ENCODE measurements at regions of chr1 and their contacts with region 1.

Region 1: DNA sequence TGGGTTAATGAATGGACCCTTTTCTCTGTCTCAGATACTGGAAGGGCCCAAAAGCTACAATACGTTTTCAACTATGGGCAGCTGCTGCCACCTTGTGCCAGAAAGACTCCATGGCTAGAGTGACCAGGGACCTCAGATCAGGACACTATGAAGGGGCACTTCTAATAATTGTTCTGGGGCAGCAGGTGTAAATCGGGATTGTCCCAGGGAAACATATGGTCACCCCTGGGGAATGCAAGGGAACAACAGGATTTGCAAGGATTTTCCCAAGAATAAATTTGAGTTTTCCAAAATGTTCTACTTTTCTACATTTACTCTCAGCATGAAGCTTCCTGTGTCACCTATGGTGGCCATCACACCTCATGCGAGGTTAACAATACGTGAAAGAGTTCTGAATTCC is 12.0 kb upstream of the FCAMR start:
- DNase-seq: no peak
- H3K4me3 ChIP-seq: no peak overlapping the region
- CTCF ChIP-seq: peak; percentile 65

Region 2: DNA sequence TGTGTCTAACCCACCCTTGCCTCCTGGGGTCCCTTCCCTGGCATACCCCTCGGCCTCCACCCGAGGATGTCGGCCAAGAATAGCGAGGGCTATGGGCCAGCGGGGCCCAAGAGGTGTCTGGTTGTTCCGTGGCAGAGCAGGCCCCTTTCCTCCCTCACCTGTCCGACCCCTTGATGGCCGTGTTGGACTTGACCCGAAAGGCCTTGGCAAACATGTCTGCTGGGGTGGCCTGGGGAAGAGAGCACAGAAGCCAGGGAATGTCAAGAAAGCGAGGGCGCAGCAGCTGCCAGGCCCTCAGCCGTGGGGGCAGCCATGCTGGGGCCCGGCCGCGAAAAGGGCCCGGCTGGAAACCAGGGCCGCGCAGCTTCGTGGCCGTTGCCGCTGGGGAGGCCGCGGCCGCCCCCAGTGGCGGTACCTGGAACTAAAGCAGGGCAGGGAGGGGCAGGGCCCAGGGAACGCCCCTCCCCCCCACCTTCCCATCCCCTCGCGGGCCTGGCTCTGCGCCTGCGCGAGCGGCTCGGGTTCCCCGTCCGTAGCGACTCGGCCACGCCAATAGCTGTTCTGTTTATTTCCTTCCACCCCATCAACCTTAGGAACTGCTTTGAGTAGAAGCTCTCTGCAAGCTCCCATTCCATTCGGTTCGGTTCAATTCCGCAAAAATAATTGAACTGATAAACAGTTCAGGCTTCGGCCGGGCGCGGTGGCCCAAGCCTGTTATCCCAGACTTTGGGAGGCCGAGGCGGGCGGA is 369.9 kb before region 1 on chr1 and contains the start of gene EIF2D:
- CTCF ChIA-PET with region 1: interaction called, 41 read pairs
- POLR2A ChIA-PET with region 1: no interaction called
- DNase-seq: no peak
- H3K4me3 ChIP-seq: peak within 1 kb of the TSS; percentile 95
- CTCF ChIP-seq: peak; percentile 99

Region 3: GRCh38 chr1:206725109-206725963 is 256.9 kb before region 1 on chr1:
- CTCF ChIA-PET with region 1: interaction called, 31 read pairs
- POLR2A ChIA-PET with region 1: no interaction called
- DNase-seq: no peak
- H3K4me3 ChIP-seq: no peak overlapping the region
- CTCF ChIP-seq: peak; percentile 74

Region 4: DNA sequence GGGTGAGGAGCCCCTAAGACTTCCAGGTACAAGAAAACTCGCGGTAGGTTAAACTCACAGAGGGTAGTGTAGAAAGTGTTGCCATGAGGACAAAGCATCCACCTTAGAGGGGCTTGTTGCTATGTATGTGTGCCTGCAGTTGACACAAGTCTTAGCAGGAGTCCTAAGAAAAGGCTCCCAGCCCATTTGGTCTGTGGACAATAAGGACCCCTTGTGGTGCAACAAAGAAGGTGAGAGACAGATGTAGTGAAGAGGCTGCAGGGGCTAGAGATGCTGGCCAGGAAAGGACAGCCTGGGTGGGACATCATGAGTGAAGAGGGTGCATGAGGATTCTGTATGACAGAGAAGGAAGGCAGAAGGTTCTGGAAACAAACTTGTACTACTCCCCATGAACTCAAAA is 173.6 kb before region 1 on chr1:
- CTCF ChIA-PET with region 1: interaction called, 27 read pairs
- POLR2A ChIA-PET with region 1: no interaction called
- DNase-seq: no peak
- H3K4me3 ChIP-seq: no peak overlapping the region
- CTCF ChIP-seq: peak; percentile 49

Region 5: DNA sequence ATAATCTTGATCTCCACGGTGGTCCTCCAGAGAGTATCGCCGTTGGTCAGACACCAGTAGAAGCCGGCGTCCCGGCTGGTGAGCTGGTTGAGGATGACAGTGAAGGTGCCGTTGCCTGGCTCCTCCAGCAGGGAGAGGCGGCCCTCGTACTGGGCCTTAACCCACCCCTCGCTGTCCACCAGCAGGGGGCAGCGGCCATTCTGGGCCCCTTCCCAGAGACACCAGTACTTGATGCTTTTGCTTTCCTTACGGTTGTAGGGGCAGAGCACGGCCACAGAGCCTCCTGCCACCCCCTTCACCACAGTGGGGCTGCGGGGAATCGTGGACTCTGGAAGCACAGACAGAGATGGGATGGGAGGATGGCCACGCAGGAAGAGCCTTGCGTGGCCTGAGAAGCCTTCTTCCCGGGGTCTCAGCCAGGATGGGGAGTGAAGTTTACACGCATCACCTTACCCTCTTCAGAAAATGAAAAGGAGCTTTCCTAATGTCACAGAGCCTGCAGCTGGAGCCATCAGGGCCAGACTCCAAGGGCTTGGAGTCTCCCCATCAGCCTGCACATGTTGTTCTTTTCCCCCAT is 46.6 kb before region 1 on chr1:
- CTCF ChIA-PET with region 1: interaction called, 30 read pairs
- POLR2A ChIA-PET with region 1: no interaction called
- DNase-seq: no peak
- H3K4me3 ChIP-seq: no peak overlapping the region
- CTCF ChIP-seq: peak; percentile 64

Region 6: DNA sequence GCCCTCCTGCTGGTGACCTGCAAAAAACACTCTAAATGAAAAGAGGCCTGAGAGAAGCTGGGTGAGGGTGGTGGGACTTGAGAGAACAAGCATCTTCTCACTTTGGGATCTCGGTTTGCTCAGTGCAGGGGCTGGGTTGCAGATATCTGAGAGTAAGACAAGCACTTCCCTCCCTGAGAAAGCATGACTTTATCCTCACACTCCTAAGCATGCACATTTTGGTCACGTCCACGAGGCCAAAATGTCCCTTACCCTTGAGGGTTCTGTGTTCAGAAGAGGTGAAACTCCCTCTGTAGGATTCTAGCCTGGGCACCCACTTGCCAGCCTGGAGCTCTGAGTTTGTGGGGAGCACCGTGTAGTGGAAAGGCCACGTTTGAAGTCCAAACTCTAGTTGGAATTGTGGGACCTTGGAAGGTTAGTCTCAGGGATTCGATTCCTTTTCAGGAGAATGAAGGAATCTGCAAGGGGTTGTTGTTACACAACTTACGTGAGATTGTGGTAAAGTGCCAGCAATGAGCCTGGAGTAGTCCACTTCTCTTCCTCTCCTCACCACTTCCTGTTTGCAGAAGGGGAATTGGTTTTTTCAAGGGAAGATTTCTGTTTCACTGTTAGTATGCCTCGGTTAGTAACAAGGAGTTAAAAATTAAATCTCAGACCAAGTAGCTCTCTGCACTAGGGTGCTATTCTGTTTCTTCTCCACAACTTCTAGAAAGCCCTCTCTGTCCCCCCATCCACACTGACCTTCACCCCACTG is 14.9 kb before region 1 on chr1:
- CTCF ChIA-PET with region 1: interaction called, 49 read pairs
- POLR2A ChIA-PET with region 1: no interaction called
- DNase-seq: no peak
- H3K4me3 ChIP-seq: no peak overlapping the region
- CTCF ChIP-seq: no peak

Region 7: DNA sequence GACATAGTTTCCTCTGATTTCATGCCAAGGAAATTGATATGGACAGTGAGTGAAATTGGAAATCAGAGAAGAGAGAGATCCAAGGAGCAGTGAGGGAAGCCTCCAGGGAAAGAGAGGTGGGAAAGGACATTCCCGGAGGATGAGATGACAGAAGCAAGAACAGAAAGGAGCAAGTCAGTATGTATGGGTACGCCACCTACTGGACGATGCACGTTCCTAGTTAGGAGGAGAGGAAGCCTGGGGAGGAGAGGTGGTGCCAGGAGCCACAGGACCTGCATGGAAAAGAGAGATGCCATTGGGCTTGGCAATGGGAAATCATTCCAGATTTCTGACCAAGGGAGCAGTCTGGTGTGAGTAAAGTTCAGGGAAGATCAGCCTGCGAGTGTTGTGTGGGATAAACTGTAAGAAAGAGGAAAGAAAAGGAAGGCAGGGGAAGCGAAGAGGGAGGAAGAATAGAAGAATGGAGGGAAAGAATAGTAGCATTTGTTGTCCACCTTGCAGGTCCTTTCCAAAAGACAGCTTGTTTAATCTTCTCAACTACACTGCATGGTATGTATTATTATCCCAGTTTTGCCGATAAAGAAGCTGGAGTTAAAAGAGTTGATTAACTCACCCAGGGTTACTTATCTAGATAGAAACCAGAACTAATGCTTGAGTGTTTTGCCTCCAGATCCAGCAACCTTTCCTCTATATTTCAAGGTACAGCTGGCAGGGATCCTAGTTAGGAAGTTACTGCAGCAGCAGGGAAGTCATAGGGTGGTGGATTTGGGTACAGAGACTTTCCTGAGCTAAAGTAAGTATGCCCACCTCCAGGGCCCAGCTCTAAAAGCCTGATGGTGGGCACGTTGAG is 23.0 kb after region 1 on chr1:
- CTCF ChIA-PET with region 1: interaction called, 31 read pairs
- POLR2A ChIA-PET with region 1: no interaction called
- DNase-seq: no peak
- H3K4me3 ChIP-seq: no peak overlapping the region
- CTCF ChIP-seq: peak; percentile 86

Region 8: GRCh38 chr1:207181838-207182237 is 199.6 kb after region 1 on chr1:
- CTCF ChIA-PET with region 1: no interaction called
- POLR2A ChIA-PET with region 1: no interaction called
- DNase-seq: no peak
- H3K4me3 ChIP-seq: no peak overlapping the region
- CTCF ChIP-seq: no peak

Region 9: DNA sequence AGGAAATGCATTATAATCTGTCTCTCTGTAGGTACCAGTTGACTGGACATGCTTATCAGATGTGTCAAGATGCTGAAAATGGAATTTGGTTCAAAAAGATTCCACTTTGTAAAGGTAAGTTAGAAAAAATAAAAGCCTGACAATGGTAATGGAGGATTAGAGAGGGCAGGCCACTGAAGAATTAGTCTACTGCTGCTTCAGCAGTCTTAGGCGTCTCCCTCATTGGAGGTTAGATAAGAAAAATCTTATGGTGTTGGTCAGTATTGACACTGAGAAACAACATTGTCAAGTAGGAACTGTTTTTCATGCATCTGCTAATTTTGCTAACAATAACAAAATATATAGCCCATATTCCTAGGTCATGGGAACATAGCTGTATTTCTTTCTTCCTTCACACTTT is 492.0 kb after region 1 on chr1:
- CTCF ChIA-PET with region 1: no interaction called
- POLR2A ChIA-PET with region 1: no interaction called
- DNase-seq: no peak
- H3K4me3 ChIP-seq: no peak overlapping the region
- CTCF ChIP-seq: no peak